ENCODE measurements at regions of chr12 and their contacts with region 1.

Region 1: DNA sequence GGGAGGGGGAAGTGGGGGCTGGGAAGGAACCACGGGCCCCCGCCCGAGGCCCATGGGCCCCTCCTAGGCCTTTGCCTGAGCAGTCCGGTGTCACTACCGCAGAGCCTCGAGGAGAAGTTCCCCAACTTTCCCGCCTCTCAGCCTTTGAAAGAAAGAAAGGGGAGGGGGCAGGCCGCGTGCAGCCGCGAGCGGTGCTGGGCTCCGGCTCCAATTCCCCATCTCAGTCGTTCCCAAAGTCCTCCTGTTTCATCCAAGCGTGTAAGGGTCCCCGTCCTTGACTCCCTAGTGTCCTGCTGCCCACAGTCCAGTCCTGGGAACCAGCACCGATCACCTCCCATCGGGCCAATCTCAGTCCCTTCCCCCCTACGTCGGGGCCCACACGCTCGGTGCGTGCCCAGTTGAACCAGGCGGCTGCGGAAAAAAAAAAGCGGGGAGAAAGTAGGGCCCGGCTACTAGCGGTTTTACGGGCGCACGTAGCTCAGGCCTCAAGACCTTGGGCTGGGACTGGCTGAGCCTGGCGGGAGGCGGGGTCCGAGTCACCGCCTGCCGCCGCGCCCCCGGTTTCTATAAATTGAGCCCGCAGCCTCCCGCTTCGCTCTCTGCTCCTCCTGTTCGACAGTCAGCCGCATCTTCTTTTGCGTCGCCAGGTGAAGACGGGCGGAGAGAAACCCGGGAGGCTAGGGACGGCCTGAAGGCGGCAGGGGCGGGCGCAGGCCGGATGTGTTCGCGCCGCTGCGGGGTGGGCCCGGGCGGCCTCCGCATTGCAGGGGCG is at the start of gene GAPDH:
- DNase-seq: peak; percentile 91
- ATAC-seq: peak; percentile 62
- H3K4me3 Mint-ChIP-seq: peak within 1 kb of the TSS; percentile 100
- H3K27ac Mint-ChIP-seq: peak within 1 kb of the TSS; percentile 98
- H3K4me1 Mint-ChIP-seq: peaks cover 37% of the 10 kb centered on the region
- H3K27me3 Mint-ChIP-seq: no peaks in the 10 kb centered on the region
- total RNA-seq, gene GAPDH: 4,618 to 4,824 TPM

Region 2: DNA sequence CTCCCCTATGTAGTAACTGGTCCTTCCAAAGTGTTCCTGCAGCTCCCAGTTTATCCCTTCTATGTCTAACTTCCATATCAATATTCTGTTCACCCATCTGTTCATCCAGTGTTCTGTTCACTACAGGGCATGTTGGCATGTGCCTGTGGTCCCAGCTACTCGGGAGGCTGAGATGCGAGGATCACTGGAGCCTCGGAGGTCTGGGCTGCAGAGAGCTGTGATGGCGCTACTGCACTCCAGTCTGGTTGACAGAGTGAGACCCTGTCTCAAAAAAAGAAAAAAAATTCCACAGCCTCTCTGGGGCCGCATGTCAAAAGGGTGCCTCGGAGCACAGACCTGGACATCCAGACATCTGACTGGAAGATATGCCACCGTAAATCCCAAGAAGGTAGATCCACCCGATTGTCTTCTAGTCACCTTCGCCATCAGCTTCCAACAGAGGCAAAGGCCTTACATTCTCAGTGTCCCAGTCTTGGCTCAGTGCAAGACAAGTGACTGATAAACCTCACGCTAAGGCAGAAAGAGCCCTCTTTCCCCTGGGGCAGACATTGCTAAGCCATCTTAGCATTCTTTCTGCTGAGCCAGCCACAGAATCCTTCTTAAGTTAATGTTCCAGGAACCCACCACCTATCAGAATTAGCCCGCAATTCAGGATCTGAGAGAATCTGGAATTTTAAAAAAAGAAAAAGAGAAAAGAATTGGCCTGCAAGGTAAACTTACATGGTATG is 228.1 kb before region 1 on chr12:
- POLR2A ChIA-PET with region 1: no interaction called
- DNase-seq: no peak
- ATAC-seq: no peak
- H3K4me3 Mint-ChIP-seq: no peak overlapping the region
- H3K27ac Mint-ChIP-seq: no peak overlapping the region
- H3K4me1 Mint-ChIP-seq: no peaks in the 10 kb centered on the region
- H3K27me3 Mint-ChIP-seq: peaks cover 21% of the 10 kb centered on the region

Region 3: GRCh38 chr12:6407236-6407954 is 126.7 kb before region 1 on chr12:
- POLR2A ChIA-PET with region 1: no interaction called
- DNase-seq: no peak
- ATAC-seq: no peak
- H3K4me3 Mint-ChIP-seq: no peak overlapping the region
- H3K27ac Mint-ChIP-seq: no peak overlapping the region
- H3K4me1 Mint-ChIP-seq: peaks cover 3% of the 10 kb centered on the region
- H3K27me3 Mint-ChIP-seq: peaks cover 15% of the 10 kb centered on the region

Region 4: GRCh38 chr12:6423267-6424007 is 110.7 kb before region 1 on chr12:
- POLR2A ChIA-PET with region 1: interaction called, 39 read pairs
- DNase-seq: peak; percentile 69
- ATAC-seq: peak; percentile 81
- H3K4me3 Mint-ChIP-seq: no peak overlapping the region
- H3K27ac Mint-ChIP-seq: peak overlapping the region; percentile 76
- H3K4me1 Mint-ChIP-seq: peaks cover 45% of the 10 kb centered on the region
- H3K27me3 Mint-ChIP-seq: peaks cover 7% of the 10 kb centered on the region

Region 5: GRCh38 chr12:6443361-6443983 is 90.6 kb before region 1 on chr12:
- POLR2A ChIA-PET with region 1: interaction called, 37 read pairs
- DNase-seq: no peak
- ATAC-seq: peak; percentile 12
- H3K4me3 Mint-ChIP-seq: peak overlapping the region; percentile 94
- H3K27ac Mint-ChIP-seq: peak overlapping the region; percentile 94
- H3K4me1 Mint-ChIP-seq: peaks cover 54% of the 10 kb centered on the region
- H3K27me3 Mint-ChIP-seq: no peaks in the 10 kb centered on the region

Region 6: GRCh38 chr12:6493497-6494257 is 40.4 kb before region 1 on chr12 and contains the start of gene NCAPD2:
- POLR2A ChIA-PET with region 1: interaction called, 44 read pairs
- DNase-seq: peak; percentile 94
- ATAC-seq: peak; percentile 87
- H3K4me3 Mint-ChIP-seq: peak within 1 kb of the TSS; percentile 97
- H3K27ac Mint-ChIP-seq: peak within 1 kb of the TSS; percentile 97
- H3K4me1 Mint-ChIP-seq: peaks cover 28% of the 10 kb centered on the region
- H3K27me3 Mint-ChIP-seq: no peaks in the 10 kb centered on the region
- total RNA-seq, gene NCAPD2: 147 to 157 TPM

Region 7: DNA sequence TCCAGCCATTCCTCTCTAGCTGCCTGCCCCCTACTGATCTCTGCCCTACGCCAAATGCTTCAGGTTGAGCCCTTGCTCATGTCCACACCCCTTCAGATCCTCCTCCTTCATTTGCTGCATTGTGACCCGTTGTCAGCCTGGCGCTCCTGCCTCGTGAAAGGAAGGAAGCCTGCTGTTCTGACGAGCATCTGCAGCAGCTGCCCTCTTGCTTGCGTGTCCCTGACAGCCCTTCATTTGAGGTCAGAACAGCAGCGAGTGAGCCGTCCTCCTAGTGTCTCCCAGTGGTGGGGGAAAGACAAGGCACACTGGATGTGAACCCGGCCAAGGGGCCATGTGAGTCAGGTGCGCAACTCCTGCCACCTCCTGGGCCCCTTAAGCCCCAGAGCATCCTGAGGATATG is 169.5 kb after region 1 on chr12:
- POLR2A ChIA-PET with region 1: no interaction called
- DNase-seq: no peak
- ATAC-seq: peak; percentile 35
- H3K4me3 Mint-ChIP-seq: no peak overlapping the region
- H3K27ac Mint-ChIP-seq: no peak overlapping the region
- H3K4me1 Mint-ChIP-seq: peaks cover 18% of the 10 kb centered on the region
- H3K27me3 Mint-ChIP-seq: peaks cover 68% of the 10 kb centered on the region